ENCODE measurements at regions of chr1 and their contacts with region 1.

Region 1: GRCh38 chr1:109802901-109803561 is 39.3 kb upstream of the EPS8L3 start:
- DNase-seq: no peak
- ATAC-seq: no peak
- H3K4me3 ChIP-seq: peak overlapping the region; percentile 46
- H3K4me3 Mint-ChIP-seq: peak overlapping the region; percentile 44 to 85 (median 80)
- H3K27ac ChIP-seq: peak overlapping the region; percentile 28
- H3K27ac Mint-ChIP-seq: peak overlapping the region; percentile 84 to 98 (median 94)
- H3K4me1 ChIP-seq: peaks cover 42 to 62% of the 10 kb centered on the region in 2 donors
- H3K4me1 Mint-ChIP-seq: peaks cover 51 to 84% (median 79%) of the 10 kb centered on the region in 7 donors
- H3K27me3 ChIP-seq: no peaks in the 10 kb centered on the region
- H3K27me3 Mint-ChIP-seq: no peaks in the 10 kb centered on the region

Region 2: GRCh38 chr1:109277434-109278204 is 525.4 kb before region 1 on chr1:
- CTCF ChIA-PET with region 1: no interaction called
- POLR2A ChIA-PET with region 1: no interaction called
- intact Hi-C with region 1: no loop called
- DNase-seq: peak in 7 of 9 donors; percentile 20 to 72 (median 35)
- ATAC-seq: peak; percentile 77
- H3K4me3 ChIP-seq: no peak overlapping the region
- H3K4me3 Mint-ChIP-seq: no peak overlapping the region
- H3K27ac ChIP-seq: no peak overlapping the region
- H3K27ac Mint-ChIP-seq: peak overlapping the region in 1 of 9 donors; percentile 44
- H3K4me1 ChIP-seq: peaks cover 3% of the 10 kb centered on the region in 2 donors
- H3K4me1 Mint-ChIP-seq: peaks cover 0 to 26% (median 10%) of the 10 kb centered on the region in 7 donors
- H3K27me3 ChIP-seq: no peaks in the 10 kb centered on the region
- H3K27me3 Mint-ChIP-seq: no peaks in the 10 kb centered on the region

Region 3: DNA sequence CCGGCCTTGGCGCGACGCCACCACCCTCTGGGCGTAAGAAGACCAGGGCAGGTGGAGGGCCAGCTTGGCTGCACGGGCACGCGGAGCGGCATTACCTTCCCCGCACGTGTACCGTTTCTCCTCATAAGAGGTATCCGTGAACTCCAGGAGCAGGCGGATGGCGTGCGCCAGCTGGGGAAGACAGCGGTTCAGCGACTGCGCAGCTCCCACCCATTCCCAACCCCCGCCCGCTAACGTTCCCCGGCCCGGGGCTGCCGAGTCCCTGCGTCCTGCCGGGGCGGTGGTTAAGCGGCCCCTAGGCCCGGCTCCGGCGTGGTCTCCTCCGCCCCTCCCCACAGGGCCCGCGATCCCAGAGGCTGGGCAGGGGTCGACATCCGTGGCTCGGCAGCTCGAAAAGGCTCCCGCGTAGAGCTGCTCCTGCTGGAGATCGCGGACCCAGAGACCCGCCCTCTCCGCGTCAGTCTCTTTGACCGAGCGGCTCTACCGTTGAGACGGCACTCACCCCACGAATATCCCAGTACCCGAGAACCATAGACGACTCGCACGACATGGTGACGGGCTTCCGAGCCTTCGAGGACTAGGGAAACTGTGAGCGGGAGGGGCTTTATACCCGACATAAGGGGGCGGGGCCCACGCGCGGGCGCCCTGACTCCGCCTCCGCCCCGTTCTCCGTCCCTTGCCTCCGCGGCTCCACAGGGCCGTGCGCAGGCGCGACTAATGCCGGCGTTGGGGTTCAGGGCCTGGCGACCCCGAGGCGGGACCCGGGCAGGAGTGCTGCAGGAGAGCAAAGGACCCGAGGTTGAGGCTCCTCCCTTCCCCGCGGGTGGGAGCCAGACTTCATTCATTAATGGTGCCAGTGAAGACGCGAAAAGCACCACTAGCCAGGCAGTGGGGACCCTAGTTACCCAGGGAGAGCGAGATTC is 63.0 kb before region 1 on chr1:
- CTCF ChIA-PET with region 1: no interaction called
- POLR2A ChIA-PET with region 1: no interaction called
- intact Hi-C with region 1: loop called in 1 of 2 experiments (anchors 10 kb)
- DNase-seq: peak; percentile 73 to 87 (median 85)
- ATAC-seq: peak; percentile 99
- H3K4me3 ChIP-seq: peak overlapping the region; percentile 70
- H3K4me3 Mint-ChIP-seq: peak overlapping the region; percentile 71 to 93 (median 87)
- H3K27ac ChIP-seq: peak overlapping the region; percentile 81
- H3K27ac Mint-ChIP-seq: peak overlapping the region; percentile 17 to 95 (median 72)
- H3K4me1 ChIP-seq: peaks cover 0 to 11% of the 10 kb centered on the region in 2 donors
- H3K4me1 Mint-ChIP-seq: peaks cover 3 to 21% (median 13%) of the 10 kb centered on the region in 7 donors
- H3K27me3 ChIP-seq: no peaks in the 10 kb centered on the region
- H3K27me3 Mint-ChIP-seq: peaks cover 0 to 51% (median 0%) of the 10 kb centered on the region in 5 donors

Region 4: DNA sequence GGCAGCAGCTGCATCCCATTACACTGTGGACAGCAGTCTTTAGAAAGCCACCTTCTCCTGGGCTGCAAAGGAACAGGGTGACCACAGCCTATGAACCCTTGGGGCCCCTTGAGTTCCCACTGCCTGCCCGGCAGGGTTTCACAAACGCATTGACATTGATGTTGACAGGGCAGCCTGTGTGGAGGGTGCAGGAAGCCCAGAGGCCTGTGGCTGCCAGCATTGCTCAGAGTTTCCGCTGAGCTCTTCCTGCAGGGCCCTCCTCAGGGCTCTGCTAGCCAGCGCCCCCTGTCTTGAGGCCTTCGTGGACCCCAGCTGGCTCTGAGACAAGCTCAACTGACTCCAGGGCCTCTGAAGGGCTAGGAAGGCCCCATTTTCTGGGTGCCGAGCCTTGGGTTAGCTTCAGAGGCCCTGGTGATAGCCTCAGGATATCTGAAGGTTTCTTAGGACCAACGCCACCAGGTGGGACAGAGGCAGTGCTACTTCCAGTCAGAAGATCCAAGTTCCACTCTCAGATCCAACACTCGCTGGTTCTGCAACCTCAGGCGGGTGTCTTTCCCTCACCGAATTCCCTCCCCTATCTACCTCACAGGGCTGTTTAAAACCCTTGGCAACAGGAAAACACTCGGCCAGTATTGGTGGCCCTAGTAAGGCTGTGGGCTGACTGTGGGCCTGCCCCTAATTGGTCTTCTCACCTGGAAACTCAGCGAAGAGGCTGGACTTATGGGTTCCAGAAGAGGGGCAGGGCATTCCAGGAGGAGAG is 12.1 kb before region 1 on chr1:
- CTCF ChIA-PET with region 1: interaction called, 35 read pairs
- POLR2A ChIA-PET with region 1: interaction called, 37 read pairs
- intact Hi-C with region 1: loop called (anchors 1 kb)
- DNase-seq: peak; percentile 47 to 78 (median 67)
- ATAC-seq: peak; percentile 93
- H3K4me3 ChIP-seq: peak overlapping the region; percentile 1
- H3K4me3 Mint-ChIP-seq: peak overlapping the region in 8 of 10 donors; percentile 26 to 62 (median 40)
- H3K27ac ChIP-seq: peak overlapping the region; percentile 44
- H3K27ac Mint-ChIP-seq: peak overlapping the region in 8 of 9 donors; percentile 49 to 94 (median 84)
- H3K4me1 ChIP-seq: peaks cover 51 to 52% of the 10 kb centered on the region in 2 donors
- H3K4me1 Mint-ChIP-seq: peaks cover 38 to 88% (median 71%) of the 10 kb centered on the region in 7 donors
- H3K27me3 ChIP-seq: no peaks in the 10 kb centered on the region
- H3K27me3 Mint-ChIP-seq: no peaks in the 10 kb centered on the region

Region 5: DNA sequence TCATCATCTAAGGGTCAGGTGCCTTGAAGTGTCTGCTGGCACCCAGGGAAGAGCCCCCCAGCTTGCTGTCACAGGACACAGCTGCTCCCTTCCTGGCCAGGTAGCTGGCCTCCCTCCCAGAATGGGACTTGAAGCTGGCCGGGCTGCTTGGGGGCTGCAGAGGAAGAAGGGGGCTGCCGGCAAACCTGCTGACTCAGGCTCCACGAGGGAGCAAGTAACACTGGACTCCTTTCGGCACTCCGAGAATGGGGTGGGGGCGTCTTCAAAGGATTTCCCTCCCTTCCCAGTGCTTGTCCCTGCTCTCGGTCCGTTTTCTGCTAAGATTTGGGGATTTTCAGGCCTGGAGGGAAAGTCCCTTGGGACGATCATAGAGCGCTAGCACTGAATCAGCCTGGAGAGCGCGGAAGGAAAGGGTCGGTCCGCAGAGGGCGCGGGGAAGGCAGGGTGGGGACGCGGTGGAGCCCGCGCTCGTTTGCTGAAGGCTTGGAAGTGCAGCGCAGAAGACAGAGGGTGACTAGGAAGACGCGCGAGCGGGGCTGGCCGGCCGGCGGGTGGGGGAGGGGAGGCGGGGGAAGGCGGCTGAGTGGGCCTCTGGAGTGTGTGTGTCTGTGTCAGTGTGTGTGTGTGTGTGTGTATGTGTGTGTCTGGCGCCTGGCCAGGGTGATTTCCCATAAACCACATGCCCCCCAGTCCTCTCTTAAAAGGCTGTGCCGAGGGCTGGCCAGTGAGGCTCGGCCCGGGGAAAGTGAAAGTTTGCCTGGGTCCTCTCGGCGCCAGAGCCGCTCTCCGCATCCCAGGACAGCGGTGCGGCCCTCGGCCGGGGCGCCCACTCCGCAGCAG is 107.3 kb after region 1 on chr1 and contains the start of gene CSF1:
- CTCF ChIA-PET with region 1: no interaction called
- POLR2A ChIA-PET with region 1: interaction called, 3 read pairs
- intact Hi-C with region 1: loop called (anchors 1 kb)
- DNase-seq: peak; percentile 15 to 72 (median 35)
- ATAC-seq: peak; percentile 71
- H3K4me3 ChIP-seq: peak within 1 kb of the TSS; percentile 65
- H3K4me3 Mint-ChIP-seq: peak within 1 kb of the TSS; percentile 78 to 98 (median 88)
- H3K27ac ChIP-seq: peak within 1 kb of the TSS; percentile 43
- H3K27ac Mint-ChIP-seq: peak within 1 kb of the TSS; percentile 38 to 97 (median 73)
- H3K4me1 ChIP-seq: peaks cover 36 to 43% of the 10 kb centered on the region in 2 donors
- H3K4me1 Mint-ChIP-seq: peaks cover 43 to 83% (median 64%) of the 10 kb centered on the region in 7 donors
- H3K27me3 ChIP-seq: no peaks in the 10 kb centered on the region
- H3K27me3 Mint-ChIP-seq: peaks cover 0 to 18% (median 0%) of the 10 kb centered on the region in 5 donors
- total RNA-seq, gene CSF1: 1.4 to 125 (median 5.9) TPM

Measured in naive thymus-derived CD4-positive, alpha-beta T cell (primary cell).